AG04449 (cell line): ENCODE measurements at regions of chr10 and their contacts with region 1.

Region 1: DNA sequence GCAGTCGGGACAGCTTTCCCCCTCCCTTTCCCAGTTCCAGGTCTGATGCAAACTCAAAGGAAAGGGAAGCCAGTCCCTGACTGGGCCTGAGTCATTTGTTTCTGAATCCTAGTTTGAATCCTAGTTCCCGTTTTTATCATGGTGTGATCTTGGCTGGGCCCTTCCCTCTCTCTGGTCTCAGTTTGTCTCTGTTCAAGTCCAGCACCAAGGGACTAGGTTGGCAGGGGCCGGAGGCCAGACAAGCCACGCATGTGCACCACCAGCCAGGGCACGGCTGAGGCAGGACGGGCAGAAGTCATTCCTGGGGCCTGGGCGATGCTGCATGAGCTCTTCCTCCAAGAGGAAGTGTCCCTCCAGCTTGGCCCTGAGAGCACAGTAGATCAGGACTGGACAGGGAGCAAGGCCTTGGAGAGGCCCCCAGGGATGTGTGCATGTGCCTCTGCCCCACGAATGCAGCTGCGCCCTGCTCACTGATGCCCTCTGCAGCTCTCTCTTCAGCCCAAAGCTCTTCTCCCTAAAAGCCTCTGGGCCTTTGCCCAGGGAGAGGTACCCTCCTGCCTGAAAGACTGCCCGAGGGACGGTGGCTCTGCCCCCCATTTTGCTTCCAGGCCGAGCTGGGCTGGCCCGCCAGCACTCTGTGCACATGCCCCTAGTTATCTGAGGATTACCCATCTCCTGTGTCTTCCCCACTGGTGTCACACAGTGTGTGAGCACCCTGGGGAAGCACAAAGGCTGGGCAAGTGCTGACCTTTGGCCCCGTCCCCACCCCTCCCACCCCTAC is 86.7 kb downstream of the ZMIZ1 start:
- DNase-seq: no peak
- H3K4me3 ChIP-seq: no peak overlapping the region
- CTCF ChIP-seq: peak; percentile 15

Region 2: DNA sequence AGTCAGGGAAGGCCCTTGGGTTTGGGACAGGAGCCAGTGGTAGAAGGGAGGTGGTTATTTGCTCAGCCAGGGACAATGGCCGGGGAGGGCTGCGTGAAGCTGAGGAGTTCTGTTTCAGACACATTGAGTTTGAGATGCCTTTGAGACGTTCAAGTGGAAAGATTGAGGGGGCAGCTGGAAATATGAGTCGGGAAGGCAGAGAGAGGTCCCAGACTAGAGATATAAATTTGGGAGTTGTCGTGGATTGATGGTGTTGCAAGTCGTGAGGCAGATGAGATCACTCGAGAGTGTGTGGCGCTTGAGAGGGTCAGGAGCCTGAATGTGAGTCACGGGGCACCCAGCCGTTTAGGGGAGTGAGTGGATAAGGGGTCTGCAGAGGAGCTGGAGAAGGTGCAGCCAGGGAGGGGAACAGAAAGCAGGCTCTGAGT is 13.4 kb before region 1 on chr10:
- CTCF ChIA-PET with region 1: interaction called, 16 read pairs
- POLR2A ChIA-PET with region 1: interaction called, 7 read pairs
- DNase-seq: no peak
- H3K4me3 ChIP-seq: no peak overlapping the region
- CTCF ChIP-seq: no peak

Region 3: GRCh38 chr10:80015911-80016830 is 860.7 kb after region 1 on chr10:
- CTCF ChIA-PET with region 1: no interaction called
- POLR2A ChIA-PET with region 1: no interaction called
- DNase-seq: no peak
- H3K4me3 ChIP-seq: no peak overlapping the region
- CTCF ChIP-seq: no peak